ENCODE measurements at regions of chr1 and their contacts with region 1.

Region 1: GRCh38 chr1:109099938-109100773 is 9.6 kb downstream of the TMEM167B start:
- DNase-seq: peak; percentile 94
- ATAC-seq: peak; percentile 95
- H3K4me3 Mint-ChIP-seq: peak overlapping the region; percentile 93
- H3K27ac Mint-ChIP-seq: peak overlapping the region; percentile 95
- H3K4me1 Mint-ChIP-seq: peaks cover 11% of the 10 kb centered on the region
- H3K27me3 Mint-ChIP-seq: no peaks in the 10 kb centered on the region

Region 2: DNA sequence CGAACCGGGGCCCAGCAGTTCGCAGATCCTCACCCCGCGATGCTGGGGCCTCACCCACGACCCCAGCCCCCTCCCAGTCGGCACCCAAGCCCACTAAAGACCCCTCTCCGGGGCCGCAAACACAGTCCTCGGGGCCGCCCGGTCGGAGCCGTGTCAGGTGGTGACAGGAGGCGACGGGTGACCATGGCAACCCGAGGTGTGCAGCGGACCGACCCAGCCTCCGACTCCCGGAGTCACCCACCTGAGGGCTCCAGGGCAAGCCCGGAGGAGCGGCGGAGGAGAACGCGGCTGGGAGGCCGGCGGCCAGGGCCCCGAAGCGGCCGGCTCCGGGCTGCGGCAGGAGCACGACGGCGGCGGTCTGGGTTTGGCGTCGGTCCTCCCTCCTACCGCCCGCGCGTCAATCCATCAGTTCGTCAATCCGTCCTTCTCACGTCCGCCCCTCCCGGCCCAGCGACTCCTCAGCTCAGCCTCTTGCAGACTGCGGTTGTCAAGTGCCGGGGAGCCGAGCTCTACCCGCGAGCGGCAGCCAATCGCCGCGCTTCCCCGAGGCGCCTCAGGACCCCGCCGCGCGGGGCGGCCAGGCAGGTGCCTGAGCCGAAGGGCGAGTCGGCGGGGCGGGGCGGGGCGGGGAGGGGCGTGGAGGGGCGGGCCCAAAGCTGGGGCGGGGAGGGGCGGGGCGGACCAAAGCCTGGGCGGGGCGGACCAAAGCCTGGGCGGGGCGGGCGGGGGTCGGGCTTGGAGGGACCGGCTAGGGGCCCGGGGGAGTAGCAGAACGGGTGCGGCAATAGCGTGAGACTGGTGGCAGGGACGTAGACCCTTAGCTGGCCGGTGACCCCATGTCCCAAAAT is 58.3 kb before region 1 on chr1 and contains the start of gene WDR47:
- POLR2A ChIA-PET with region 1: interaction called, 18 read pairs
- DNase-seq: peak; percentile 98
- ATAC-seq: peak; percentile 98
- H3K4me3 Mint-ChIP-seq: peak within 1 kb of the TSS; percentile 93
- H3K27ac Mint-ChIP-seq: peak within 1 kb of the TSS; percentile 90
- H3K4me1 Mint-ChIP-seq: peaks cover 13% of the 10 kb centered on the region
- H3K27me3 Mint-ChIP-seq: no peaks in the 10 kb centered on the region
- total RNA-seq, gene WDR47: 12.4 to 14.7 TPM

Region 3: GRCh38 chr1:109075531-109076490 is 24.3 kb before region 1 on chr1 and contains the start of gene TAF13:
- POLR2A ChIA-PET with region 1: interaction called, 31 read pairs
- DNase-seq: peak; percentile 89
- ATAC-seq: peak; percentile 99
- H3K4me3 Mint-ChIP-seq: peak within 1 kb of the TSS; percentile 97
- H3K27ac Mint-ChIP-seq: peak within 1 kb of the TSS; percentile 97
- H3K4me1 Mint-ChIP-seq: peaks cover 8% of the 10 kb centered on the region
- H3K27me3 Mint-ChIP-seq: no peaks in the 10 kb centered on the region
- total RNA-seq, gene TAF13: 17.3 to 19.0 TPM

Region 4: GRCh38 chr1:109112652-109113285 is 12.6 kb after region 1 on chr1:
- POLR2A ChIA-PET with region 1: interaction called, 53 read pairs
- DNase-seq: peak; percentile 93
- ATAC-seq: peak; percentile 60
- H3K4me3 Mint-ChIP-seq: peak overlapping the region; percentile 86
- H3K27ac Mint-ChIP-seq: peak overlapping the region; percentile 37
- H3K4me1 Mint-ChIP-seq: peaks cover 36% of the 10 kb centered on the region
- H3K27me3 Mint-ChIP-seq: peaks cover 22% of the 10 kb centered on the region

Region 5: GRCh38 chr1:109148987-109149561 is 48.9 kb after region 1 on chr1:
- POLR2A ChIA-PET with region 1: no interaction called
- DNase-seq: no peak
- ATAC-seq: no peak
- H3K4me3 Mint-ChIP-seq: no peak overlapping the region
- H3K27ac Mint-ChIP-seq: no peak overlapping the region
- H3K4me1 Mint-ChIP-seq: no peaks in the 10 kb centered on the region
- H3K27me3 Mint-ChIP-seq: peaks cover 2% of the 10 kb centered on the region